Activated CD4-positive, alpha-beta memory T cell treated with anti-CD3 and anti-CD28 coated beads, Interleukin-2, amount 10 ng/mL, durations not matched to agents 7 days and 5 days (primary cell): ENCODE measurements at regions of chr6 and their contacts with region 1.

Region 1: GRCh38 chr6:33771146-33772081 is 17.5 kb downstream of the LEMD2 start:
- DNase-seq: peak; percentile 68
- H3K4me3 Mint-ChIP-seq: no peak overlapping the region
- H3K27ac Mint-ChIP-seq: no peak overlapping the region
- H3K4me1 Mint-ChIP-seq: peaks cover 7% of the 10 kb centered on the region
- H3K27me3 Mint-ChIP-seq: peaks cover 8% of the 10 kb centered on the region

Region 2: DNA sequence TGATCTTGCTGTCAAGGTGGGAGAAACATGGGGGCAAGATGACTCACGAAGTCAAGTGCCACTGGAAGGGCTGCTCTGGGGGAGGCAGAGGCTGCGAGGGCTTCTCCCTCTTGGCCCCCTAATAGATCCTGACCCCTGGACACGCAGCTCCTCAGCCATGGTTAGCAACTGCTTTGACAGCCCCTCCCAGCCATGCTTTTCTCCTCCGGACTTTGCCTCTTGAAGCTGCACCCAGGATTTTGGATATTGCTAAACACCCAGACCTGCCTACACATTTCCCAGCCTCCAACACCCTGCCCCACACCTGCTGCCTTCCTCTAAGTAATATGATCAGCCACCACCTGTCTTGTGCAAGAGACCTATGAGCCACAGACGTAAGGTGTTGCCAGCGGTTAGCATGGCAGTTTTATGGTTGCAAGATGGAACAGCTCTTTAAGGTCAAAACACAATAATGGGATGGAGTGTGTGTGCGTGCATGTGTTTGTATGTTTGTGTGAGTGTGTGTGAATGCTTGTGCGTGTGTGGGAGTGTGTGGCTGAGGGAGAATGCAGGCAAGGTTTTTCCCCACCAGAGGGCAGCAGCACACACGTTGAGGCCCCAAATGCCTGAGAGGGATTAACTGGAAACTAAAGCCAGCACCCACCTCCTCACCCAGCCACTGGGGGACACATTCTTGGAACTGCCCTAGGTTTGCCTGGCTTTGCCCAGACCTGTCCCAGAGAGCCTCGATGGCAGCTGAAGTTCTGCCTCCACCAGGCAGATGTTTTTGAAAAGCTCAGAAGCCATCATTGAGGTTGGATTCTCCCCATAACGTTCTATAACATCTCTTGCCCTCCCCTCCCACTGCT is 27.2 kb before region 1 on chr6:
- CTCF ChIA-PET with region 1: interaction called, 10 read pairs
- POLR2A ChIA-PET with region 1: no interaction called
- DNase-seq: peak; percentile 76
- H3K4me3 Mint-ChIP-seq: no peak overlapping the region
- H3K27ac Mint-ChIP-seq: no peak overlapping the region
- H3K4me1 Mint-ChIP-seq: no peaks in the 10 kb centered on the region
- H3K27me3 Mint-ChIP-seq: peaks cover 21% of the 10 kb centered on the region

Region 3: DNA sequence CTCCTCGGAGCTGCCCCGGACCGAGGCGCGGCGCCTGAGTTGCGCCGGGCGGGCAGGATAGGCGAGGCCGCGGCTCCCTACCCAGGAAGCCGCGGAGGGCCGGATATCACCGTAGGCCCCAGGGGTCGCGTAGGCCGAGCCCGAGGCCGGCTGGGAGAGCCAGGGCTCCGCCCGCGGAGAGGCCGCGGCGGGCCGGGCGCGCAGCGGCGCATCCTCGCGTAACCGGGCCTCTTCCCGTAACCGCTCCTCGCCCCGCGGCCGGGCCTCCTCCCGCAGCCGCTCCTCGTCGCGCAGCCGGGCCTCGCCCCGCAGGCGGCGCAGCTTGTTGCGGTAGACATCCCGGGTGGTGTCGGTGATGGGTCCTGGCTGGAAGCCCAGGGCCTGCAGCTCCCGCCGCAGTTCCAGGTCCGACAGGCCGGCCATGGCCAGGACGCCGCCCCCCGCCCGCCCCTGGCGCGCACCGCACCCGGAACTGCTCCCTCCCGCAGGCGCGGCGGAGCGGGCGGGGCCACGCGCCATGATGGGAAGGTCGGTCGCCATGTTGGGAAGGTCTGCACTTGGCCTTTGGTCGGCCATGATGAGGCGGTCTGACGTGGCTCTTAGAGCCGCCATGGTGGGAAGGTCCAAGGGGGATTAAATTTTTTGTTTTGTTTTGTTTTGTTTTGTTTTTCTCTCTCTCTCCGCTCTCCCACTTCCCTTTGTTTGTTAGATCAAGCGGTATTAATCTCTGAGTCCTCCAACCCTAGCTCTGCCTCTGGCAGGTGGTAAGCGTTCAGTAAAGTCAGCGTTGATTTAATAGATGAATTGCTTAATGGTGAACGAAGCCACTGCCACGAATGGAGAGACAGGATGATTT is 17.5 kb after region 1 on chr6 and contains the start of gene LEMD2:
- CTCF ChIA-PET with region 1: interaction called, 22 read pairs
- POLR2A ChIA-PET with region 1: interaction called, 18 read pairs
- DNase-seq: peak; percentile 93
- H3K4me3 Mint-ChIP-seq: peak within 1 kb of the TSS; percentile 96
- H3K27ac Mint-ChIP-seq: peak within 1 kb of the TSS; percentile 98
- H3K4me1 Mint-ChIP-seq: peaks cover 49% of the 10 kb centered on the region
- H3K27me3 Mint-ChIP-seq: peaks cover 19% of the 10 kb centered on the region
- total RNA-seq, gene LEMD2: 70.6 to 76.1 TPM

Region 4: GRCh38 chr6:34027445-34027936 is 256.1 kb after region 1 on chr6:
- CTCF ChIA-PET with region 1: interaction called, 133 read pairs
- POLR2A ChIA-PET with region 1: interaction called, 7 read pairs
- DNase-seq: peak; percentile 70
- H3K4me3 Mint-ChIP-seq: no peak overlapping the region
- H3K27ac Mint-ChIP-seq: no peak overlapping the region
- H3K4me1 Mint-ChIP-seq: no peaks in the 10 kb centered on the region
- H3K27me3 Mint-ChIP-seq: peaks cover 2% of the 10 kb centered on the region

Region 5: GRCh38 chr6:34154668-34155447 is 383.4 kb after region 1 on chr6:
- CTCF ChIA-PET with region 1: interaction called, 11 read pairs
- POLR2A ChIA-PET with region 1: no interaction called
- DNase-seq: peak; percentile 60
- H3K4me3 Mint-ChIP-seq: no peak overlapping the region
- H3K27ac Mint-ChIP-seq: no peak overlapping the region
- H3K4me1 Mint-ChIP-seq: no peaks in the 10 kb centered on the region
- H3K27me3 Mint-ChIP-seq: peaks cover 65% of the 10 kb centered on the region